ENCODE measurements at regions of chr10 and their contacts with region 1.

Region 1: DNA sequence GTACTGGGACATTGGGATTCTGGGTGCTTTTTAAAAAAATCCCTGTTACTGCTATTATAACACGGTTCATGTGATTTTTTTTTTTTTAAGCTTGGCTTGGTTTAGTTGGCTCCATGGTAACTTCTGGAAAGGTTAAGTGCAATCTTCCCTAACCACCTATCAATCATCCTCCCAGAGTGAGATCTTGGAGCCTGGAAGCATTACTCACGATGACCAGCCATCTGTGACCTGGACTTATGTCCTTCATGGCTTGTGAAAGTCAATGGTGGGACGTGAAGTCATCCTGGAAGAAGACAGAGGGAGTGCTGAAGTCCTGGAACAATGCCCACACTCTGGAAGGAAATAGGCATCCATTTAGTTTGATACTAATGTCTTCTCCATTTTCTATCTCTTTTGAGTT is 135.5 kb upstream of the FRMD4A start:
- DNase-seq: no peak
- H3K4me3 ChIP-seq: no peak overlapping the region
- H3K27ac ChIP-seq: no peak overlapping the region
- H3K4me1 ChIP-seq: no peaks in the 10 kb centered on the region
- H3K27me3 ChIP-seq: no peaks in the 10 kb centered on the region
- CTCF ChIP-seq: no peak

Region 2: GRCh38 chr10:14240253-14241189 is 225.7 kb before region 1 on chr10:
- CTCF ChIA-PET with region 1: no interaction called
- dilution Hi-C with region 1: no loop called
- in situ Hi-C with region 1: no loop called
- intact Hi-C with region 1: no loop called
- DNase-seq: no peak
- H3K4me3 ChIP-seq: no peak overlapping the region
- H3K27ac ChIP-seq: no peak overlapping the region
- H3K4me1 ChIP-seq: peaks cover 7% of the 10 kb centered on the region
- H3K27me3 ChIP-seq: no peaks in the 10 kb centered on the region
- CTCF ChIP-seq: no peak

Region 3: GRCh38 chr10:14414901-14415300 is 51.4 kb before region 1 on chr10:
- CTCF ChIA-PET with region 1: no interaction called
- dilution Hi-C with region 1: loop called (anchors 5 kb)
- in situ Hi-C with region 1: no loop called
- intact Hi-C with region 1: no loop called
- DNase-seq: peak; percentile 51
- H3K4me3 ChIP-seq: no peak overlapping the region
- H3K27ac ChIP-seq: no peak overlapping the region
- H3K4me1 ChIP-seq: peaks cover 14% of the 10 kb centered on the region
- H3K27me3 ChIP-seq: no peaks in the 10 kb centered on the region
- CTCF ChIP-seq: no peak

Measured in mammary epithelial cell (primary cell).